ENCODE measurements at regions of chr1 and their contacts with region 1.

Region 1: DNA sequence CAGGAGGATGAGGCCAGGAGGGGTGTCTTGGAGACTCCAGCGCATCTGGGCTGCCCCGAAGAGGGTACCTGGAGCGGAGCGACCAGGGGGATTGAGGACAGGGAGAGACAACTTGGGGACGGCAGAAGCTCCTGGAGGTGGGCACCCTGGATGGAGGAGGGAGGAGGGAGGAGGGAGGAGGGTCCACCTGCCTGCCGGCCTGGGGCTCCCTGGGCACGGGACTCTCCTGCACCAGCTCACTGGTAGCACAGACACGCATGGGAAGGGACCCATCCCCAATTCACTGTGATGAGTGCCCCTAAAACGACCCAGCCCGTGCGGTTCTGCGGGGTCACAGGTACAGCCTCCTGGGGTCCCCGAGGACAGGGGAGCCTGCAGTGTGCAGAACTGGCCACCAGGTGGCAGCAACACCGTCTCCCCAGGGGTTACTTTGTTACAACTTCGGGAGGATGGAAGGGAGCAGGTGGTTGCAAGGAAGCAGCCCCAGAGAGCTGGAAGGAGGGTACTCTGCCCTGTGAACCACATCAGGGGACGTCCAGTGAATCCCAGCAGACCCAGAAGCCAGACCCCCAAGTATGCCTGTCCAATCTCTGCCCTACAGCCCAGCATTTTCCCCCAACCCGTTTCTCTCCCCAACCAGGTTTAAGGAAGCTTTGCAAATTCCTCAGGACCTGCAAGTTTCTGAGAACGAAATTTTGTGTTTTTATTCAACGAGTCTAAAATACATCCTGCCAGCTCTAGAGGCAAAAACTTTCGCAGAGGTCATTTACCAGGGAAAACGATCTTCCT is 482.4 kb downstream of the NPHP4 start:
- DNase-seq: peak; percentile 83
- ATAC-seq: peak; percentile 80

Region 2: GRCh38 chr1:5481889-5482288 is 28.0 kb before region 1 on chr1:
- intact Hi-C with region 1: loop called (anchors 1 kb)
- DNase-seq: no peak
- ATAC-seq: no peak

Region 3: DNA sequence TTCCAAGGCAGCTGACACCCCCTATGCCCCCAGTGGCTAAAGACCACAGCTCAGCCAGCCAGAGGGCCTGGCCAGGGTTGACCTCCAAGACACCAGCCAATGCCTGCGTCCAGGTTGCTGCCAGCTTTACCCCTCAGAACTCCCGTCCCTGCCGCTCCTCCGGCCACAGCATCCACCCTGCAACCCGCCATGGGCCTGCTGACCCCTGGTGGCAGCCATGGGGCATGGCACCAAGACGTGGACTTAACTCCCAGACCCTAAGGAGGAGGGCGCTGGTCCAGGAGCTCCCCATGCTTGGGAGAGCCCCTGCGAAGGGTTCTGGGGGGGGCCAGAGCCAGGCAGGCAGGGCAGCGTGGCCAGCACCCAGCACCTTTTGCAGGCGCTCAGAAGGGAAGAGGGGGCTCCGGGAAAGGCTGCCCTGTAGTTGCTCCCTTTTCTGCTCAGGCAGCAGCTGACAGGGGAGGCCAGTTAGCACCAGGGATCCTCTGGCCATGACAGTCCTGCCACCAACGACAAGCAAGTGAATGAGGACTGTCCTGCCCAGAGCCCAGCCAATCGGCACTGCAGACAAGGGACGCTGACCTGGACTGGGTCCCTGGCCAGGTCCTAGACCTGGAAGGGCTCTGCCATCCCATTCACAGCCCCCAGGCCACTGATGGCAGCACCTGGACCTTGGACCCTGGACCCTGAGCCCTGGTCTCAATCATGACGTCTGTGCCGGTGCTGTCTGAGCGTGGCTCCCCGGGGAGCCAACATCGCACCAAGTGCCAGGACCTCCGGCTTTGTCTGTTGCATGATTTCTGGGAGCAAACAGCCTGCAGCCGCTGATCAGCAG is 236.1 kb after region 1 on chr1:
- intact Hi-C with region 1: loop called (anchors 10 kb)
- DNase-seq: peak; percentile 83
- ATAC-seq: peak; percentile 84

Region 4: GRCh38 chr1:5975133-5975880 is 465.4 kb after region 1 on chr1:
- intact Hi-C with region 1: loop called (anchors 10 kb)
- DNase-seq: peak; percentile 70
- ATAC-seq: peak; percentile 79

Region 5: GRCh38 chr1:6538956-6539355 is 1029.1 kb after region 1 on chr1:
- intact Hi-C with region 1: no loop called
- DNase-seq: no peak
- ATAC-seq: no peak